Caco-2 (cell line): ENCODE measurements at regions of chr3 and their contacts with region 1.

Region 1: DNA sequence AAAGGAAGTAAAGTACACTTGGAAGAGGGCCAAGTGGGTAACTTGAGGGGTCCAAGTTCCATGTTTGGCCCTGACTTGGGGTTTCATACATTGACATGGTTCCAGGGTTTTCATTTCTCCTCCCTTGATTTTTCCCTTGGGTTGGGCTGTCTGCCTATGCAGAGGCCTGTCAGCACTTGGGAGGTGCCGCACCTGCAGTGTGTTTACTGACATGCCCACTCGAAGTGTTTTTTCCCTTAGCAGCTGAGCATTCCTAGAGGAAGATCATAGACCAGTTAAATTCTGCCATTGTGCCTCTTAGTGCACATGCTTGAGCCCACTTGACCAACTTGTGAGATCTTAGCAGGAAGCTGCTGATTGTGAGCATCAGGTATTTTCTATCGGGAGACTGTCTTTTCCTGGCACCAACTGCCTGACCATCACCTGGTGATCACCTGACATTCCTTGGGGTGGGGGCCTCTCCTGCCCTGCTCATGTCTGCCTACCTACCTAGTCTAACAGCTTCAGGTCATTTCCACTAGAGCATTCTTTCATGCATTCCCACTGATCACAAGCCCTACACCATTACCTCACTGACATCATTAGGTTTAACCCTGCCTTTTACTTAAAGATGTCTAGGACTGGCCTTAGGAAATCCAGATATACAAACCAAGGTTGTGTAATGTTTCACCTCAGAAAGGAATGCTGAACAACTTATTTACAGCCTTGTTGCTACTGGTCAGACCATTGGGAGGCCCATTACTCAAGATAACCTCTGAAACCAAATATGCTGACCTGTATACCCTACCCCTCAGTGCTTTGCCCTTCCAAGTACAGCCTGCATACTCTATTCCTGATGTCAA is 68.4 kb downstream of the CD47 start:
- DNase-seq: peak; percentile 63 to 70
- H3K4me3 ChIP-seq: no peak overlapping the region
- H3K4me3 Mint-ChIP-seq: no peak overlapping the region
- H3K27ac Mint-ChIP-seq: peak overlapping the region; percentile 14
- H3K4me1 ChIP-seq: peaks cover 9% of the 10 kb centered on the region; the same call in 1 of the 2 replicates
- H3K4me1 Mint-ChIP-seq: peaks cover 20% of the 10 kb centered on the region
- H3K27me3 ChIP-seq: no peaks in the 10 kb centered on the region
- H3K27me3 Mint-ChIP-seq: no peaks in the 10 kb centered on the region
- CTCF ChIP-seq: no peak

Region 2: DNA sequence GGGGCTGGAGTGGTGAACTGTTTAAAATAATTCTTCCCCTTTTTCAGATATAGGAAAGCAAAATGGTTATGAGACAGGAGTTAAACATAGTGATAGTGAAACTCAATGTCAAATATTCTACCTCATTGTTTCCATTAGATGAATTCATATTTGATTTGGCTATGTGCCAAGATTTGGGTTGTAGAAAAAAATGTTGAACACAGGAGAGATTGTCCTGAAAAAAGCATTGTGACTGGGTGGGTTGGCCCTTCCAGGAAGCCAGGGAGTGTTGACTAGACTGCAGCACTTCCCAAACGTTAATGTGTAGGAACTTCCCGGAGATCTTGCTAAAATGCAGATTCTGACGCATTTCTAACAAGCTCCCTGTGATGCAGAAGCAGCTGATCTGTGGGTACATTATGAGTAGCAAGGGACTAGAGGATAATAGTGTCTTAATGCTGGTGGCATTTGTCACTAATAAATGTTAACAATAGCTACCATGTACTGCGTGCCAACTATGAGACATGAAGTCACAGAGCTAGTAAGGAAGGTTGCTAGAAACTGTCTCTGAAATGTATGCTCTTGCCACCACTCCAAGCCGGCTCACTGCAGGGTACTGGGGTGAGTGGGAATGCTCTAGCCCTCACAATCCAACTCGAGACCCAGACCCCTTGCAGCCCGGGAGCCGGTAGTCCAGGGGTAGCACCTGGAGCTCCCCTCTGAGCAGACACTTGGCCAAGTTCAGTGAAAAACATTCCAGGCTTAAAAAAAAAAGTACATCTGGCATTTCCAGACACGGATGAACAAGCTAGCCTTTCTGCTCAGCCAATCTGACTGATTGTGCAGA is 52.3 kb before region 1 on chr3:
- CTCF ChIA-PET with region 1: no interaction called
- POLR2A ChIA-PET with region 1: no interaction called
- intact Hi-C with region 1: no loop called
- DNase-seq: no peak
- H3K4me3 ChIP-seq: no peak overlapping the region
- H3K4me3 Mint-ChIP-seq: no peak overlapping the region
- H3K27ac Mint-ChIP-seq: no peak overlapping the region
- H3K4me1 ChIP-seq: no peaks in the 10 kb centered on the region
- H3K4me1 Mint-ChIP-seq: no peaks in the 10 kb centered on the region
- H3K27me3 ChIP-seq: no peaks in the 10 kb centered on the region
- H3K27me3 Mint-ChIP-seq: peaks cover 3% of the 10 kb centered on the region
- CTCF ChIP-seq: no peak

Region 3: GRCh38 chr3:108006077-108006771 is 16.3 kb before region 1 on chr3:
- CTCF ChIA-PET with region 1: no interaction called
- POLR2A ChIA-PET with region 1: no interaction called
- intact Hi-C with region 1: loop called (anchors 1 kb)
- DNase-seq: peak; percentile 45 to 65
- H3K4me3 ChIP-seq: no peak overlapping the region
- H3K4me3 Mint-ChIP-seq: no peak overlapping the region
- H3K27ac Mint-ChIP-seq: no peak overlapping the region
- H3K4me1 ChIP-seq: peaks cover 9% of the 10 kb centered on the region; the same call in 1 of the 2 replicates
- H3K4me1 Mint-ChIP-seq: peaks cover 17% of the 10 kb centered on the region
- H3K27me3 ChIP-seq: no peaks in the 10 kb centered on the region
- H3K27me3 Mint-ChIP-seq: peaks cover 5% of the 10 kb centered on the region
- CTCF ChIP-seq: no peak

Region 4: DNA sequence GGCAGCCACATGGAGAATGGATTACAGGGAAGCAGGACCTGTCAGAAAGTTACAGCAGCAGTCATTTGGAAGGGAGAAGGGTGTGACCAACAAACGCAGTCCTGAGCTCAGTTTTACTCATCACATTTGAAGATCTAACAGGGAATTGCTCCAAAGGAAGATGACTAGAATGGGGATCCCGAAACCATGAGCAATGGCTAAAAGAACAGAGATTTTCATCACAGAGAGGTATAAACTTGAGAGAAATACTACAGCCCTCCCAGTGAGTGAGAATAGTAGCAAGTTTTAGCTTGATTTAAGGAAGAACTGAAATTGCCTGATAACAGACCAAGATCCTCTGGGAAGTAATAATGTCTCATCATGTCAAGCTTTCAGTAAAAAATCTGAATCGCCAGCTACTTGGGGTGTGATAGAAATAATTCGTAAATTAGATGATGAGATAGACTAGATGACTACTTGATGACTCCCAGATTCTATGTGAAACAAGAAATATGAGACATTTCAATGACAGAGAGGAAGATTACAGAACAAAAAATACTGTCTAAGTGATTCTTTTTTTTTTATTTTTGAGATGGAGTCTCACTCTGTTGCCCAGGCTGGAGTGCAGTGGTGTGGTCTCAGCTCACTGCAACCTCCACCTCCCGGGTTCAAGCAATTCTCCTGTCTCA is 51.4 kb after region 1 on chr3:
- CTCF ChIA-PET with region 1: no interaction called
- POLR2A ChIA-PET with region 1: no interaction called
- intact Hi-C with region 1: no loop called
- DNase-seq: no peak
- H3K4me3 ChIP-seq: no peak overlapping the region
- H3K4me3 Mint-ChIP-seq: no peak overlapping the region
- H3K27ac Mint-ChIP-seq: no peak overlapping the region
- H3K4me1 ChIP-seq: no peaks in the 10 kb centered on the region
- H3K4me1 Mint-ChIP-seq: no peaks in the 10 kb centered on the region
- H3K27me3 ChIP-seq: no peaks in the 10 kb centered on the region
- H3K27me3 Mint-ChIP-seq: peaks cover 3% of the 10 kb centered on the region
- CTCF ChIP-seq: no peak